Tibial artery (tissue), 4 donors: ENCODE measurements at regions of chr6 and their contacts with region 1.

Region 1: GRCh38 chr6:26122793-26123674 is 35.8 kb downstream of the HFE start:
- DNase-seq: peak; percentile 97
- H3K4me3 ChIP-seq: peak overlapping the region; percentile 94 to 95
- H3K27ac ChIP-seq: peak overlapping the region; percentile 98
- H3K4me1 ChIP-seq: peaks cover 0 to 20% (median 10%) of the 10 kb centered on the region in 4 donors
- H3K27me3 ChIP-seq: no peaks in the 10 kb centered on the region
- CTCF ChIP-seq: no peak

Region 2: DNA sequence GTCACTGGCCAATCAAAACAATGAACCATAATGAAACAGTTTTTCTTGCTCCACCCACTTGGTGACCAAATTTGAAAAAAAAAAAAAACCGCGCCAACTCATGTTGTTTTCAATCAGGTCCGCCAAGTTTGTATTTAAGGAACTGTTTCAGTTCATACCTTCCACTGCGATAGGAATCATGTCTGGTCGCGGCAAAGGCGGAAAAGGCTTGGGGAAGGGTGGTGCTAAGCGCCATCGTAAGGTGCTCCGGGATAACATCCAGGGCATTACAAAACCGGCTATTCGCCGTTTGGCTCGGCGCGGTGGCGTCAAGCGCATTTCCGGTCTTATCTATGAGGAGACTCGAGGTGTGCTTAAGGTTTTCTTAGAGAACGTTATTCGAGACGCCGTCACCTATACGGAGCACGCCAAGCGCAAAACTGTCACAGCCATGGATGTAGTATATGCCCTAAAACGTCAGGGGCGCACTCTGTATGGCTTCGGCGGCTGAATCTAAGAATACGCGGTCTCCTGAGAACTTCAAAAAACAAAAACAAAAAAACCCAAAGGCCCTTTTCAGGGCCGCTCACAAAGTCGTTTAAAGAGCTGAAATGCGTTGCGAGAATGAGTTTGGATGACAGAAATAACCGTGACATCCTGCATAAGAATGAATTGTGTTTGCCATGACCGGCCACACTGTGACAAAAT is 19.1 kb before region 1 on chr6:
- intact Hi-C with region 1: loop called (anchors 2 kb)
- DNase-seq: peak; percentile 87 to 94
- H3K4me3 ChIP-seq: peak overlapping the region; percentile 56 to 70
- H3K27ac ChIP-seq: peak overlapping the region; percentile 82 to 86
- H3K4me1 ChIP-seq: peaks cover 0 to 12% (median 2%) of the 10 kb centered on the region in 4 donors
- H3K27me3 ChIP-seq: no peaks in the 10 kb centered on the region
- CTCF ChIP-seq: peak; percentile 38 to 40

Region 3: GRCh38 chr6:26383624-26384417 is 260.8 kb after region 1 on chr6:
- intact Hi-C with region 1: no loop called
- DNase-seq: no peak
- H3K4me3 ChIP-seq: peak overlapping the region; percentile 68 to 85
- H3K27ac ChIP-seq: peak overlapping the region; percentile 77 to 82
- H3K4me1 ChIP-seq: peaks cover 0 to 13% (median 5%) of the 10 kb centered on the region in 4 donors
- H3K27me3 ChIP-seq: no peaks in the 10 kb centered on the region
- CTCF ChIP-seq: no peak

Region 4: GRCh38 chr6:26743157-26743821 is 620.3 kb after region 1 on chr6:
- intact Hi-C with region 1: no loop called
- DNase-seq: no peak
- H3K4me3 ChIP-seq: no peak overlapping the region
- H3K27ac ChIP-seq: no peak overlapping the region
- H3K4me1 ChIP-seq: no peaks in the 10 kb centered on the region
- H3K27me3 ChIP-seq: peaks cover 0 to 31% of the 10 kb centered on the region in 2 donors
- CTCF ChIP-seq: no peak